Activated CD4-positive, alpha-beta T cell treated with anti-CD3 and anti-CD28 coated beads, Interleukin-2, amount 10 ng/mL, durations not matched to agents 24 days and 14 days (primary cell): ENCODE measurements at regions of chr4 and their contacts with region 1.

Region 1: DNA sequence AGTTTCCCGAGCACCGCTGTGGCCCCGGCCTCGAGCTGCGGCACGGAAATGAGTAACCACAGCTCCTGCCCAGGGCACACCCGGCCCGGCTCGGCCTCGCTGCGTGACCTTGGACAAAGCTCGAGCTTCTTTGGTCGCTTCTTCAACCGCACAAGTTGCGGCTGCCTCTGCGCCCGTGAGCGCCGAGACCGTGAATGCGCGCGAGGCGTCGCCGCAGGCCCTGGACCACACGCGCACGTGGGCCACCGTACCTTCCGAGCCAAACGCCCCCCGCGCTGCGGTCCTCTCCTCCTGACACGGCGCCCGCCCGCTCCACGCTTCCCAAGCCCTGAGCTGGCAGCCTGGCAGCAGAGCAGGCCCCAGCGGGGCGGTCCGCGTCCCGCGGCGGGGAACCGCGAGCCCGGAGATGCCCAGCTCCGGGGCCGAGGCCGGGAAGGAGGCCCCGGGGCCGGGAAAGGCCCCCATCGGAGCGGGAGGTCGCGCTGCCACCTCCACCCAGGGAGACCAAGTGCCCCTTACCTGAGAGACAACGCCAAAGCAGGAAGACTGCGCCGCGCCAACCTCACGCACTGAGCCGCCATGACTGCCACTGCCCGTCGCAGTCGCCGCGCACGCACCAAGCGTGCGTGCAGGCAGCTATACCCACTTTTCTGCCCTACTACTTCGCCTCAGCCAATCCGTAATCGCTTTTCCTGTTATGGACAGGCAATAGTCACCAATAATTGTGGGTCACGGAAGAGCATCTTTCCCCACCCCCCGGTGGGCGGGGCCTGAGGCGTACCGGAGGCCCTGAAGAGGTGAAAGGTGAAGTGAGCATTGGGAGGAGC is at the start of gene GRPEL1:
- DNase-seq: peak; percentile 100
- H3K4me3 Mint-ChIP-seq: peak within 1 kb of the TSS; percentile 90
- H3K27ac Mint-ChIP-seq: peak within 1 kb of the TSS; percentile 94
- H3K4me1 Mint-ChIP-seq: peaks cover 29% of the 10 kb centered on the region
- H3K27me3 Mint-ChIP-seq: peaks cover 15% of the 10 kb centered on the region
- total RNA-seq, gene GRPEL1: 100 and 106 TPM in 2 replicates

Region 2: DNA sequence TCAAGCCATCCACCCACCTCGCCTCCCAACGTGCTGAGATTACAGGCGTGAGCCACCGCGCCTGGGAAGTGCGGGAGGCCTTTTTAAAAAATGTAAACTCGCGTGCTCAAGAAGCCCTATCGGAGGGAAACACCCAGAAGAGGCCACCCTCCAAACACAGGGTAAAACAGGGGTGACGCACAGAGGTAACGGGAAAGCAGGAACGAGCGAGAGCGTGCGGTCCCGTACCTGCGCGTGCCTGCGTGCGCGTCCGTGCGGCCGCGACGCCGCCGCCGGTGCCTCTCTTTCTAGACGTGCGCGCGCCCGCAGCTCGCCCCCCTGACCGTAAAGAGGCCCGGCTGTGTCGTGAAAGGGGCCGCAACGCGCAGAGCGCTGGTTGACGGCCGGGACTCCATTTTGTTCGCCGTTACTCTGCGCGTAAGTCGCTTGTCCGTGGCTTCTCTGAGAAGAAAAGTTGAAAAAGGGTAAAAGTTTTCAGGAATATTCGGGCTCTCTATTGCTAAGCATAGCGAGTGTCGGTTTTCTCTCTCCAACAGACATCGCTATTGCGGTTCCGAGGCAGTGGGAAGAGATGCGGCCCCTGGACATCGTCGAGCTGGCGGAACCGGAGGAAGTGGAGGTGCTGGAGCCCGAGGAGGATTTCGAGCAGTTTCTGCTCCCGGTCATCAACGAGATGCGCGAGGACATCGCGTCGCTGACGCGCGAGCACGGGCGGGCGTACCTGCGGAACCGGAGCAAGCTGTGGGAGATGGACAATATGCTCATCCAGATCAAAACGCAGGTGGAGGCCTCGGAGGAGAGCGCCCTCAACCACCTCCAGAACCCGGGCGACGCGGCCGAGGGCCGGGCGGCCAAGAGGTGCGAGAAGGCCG is 427.1 kb before region 1 on chr4 and contains the start of gene MRFAP1:
- intact Hi-C with region 1: loop called (anchors 1 kb)
- DNase-seq: peak; percentile 98
- H3K4me3 Mint-ChIP-seq: peak within 1 kb of the TSS; percentile 94
- H3K27ac Mint-ChIP-seq: peak within 1 kb of the TSS; percentile 94
- H3K4me1 Mint-ChIP-seq: peaks cover 20% of the 10 kb centered on the region
- H3K27me3 Mint-ChIP-seq: no peaks in the 10 kb centered on the region
- total RNA-seq, gene MRFAP1: 122 TPM in 2 replicates

Region 3: DNA sequence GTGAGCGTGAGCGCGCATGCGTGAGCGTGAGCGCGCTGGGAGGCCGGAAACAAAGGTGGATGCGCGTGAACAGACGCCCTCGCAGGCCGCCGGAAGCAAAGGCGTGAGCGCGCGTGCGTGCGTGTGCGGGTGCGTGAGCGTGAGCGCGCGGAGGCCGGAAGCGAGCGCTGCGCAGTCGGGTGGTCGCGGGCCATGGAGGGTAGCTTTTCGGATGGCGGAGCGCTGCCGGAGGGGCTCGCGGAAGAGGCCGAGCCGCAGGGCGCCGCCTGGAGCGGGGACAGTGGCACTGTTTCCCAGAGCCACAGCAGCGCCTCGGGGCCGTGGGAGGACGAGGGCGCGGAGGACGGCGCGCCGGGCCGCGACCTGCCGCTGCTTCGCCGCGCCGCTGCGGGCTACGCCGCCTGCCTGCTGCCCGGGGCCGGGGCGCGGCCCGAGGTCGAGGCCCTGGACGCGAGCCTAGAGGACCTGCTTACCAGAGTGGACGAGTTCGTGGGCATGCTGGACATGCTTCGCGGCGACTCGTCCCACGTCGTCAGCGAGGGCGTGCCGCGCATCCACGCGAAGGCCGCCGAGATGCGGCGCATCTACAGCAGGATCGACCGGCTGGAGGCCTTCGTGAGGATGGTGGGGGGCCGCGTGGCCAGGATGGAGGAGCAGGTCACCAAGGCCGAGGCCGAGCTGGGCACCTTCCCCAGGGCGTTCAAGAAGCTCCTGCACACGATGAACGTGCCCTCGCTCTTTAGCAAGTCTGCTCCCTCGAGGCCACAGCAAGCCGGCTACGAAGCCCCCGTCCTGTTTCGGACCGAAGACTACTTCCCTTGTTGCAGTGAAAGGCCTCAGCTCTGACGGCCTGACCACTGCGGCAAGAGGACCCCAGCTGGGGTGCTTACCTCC is 351.4 kb before region 1 on chr4 and contains the start of gene BLOC1S4:
- intact Hi-C with region 1: loop called (anchors 1 kb)
- DNase-seq: peak; percentile 97
- H3K4me3 Mint-ChIP-seq: peak within 1 kb of the TSS; percentile 98
- H3K27ac Mint-ChIP-seq: peak within 1 kb of the TSS; percentile 99
- H3K4me1 Mint-ChIP-seq: peaks cover 23% of the 10 kb centered on the region
- H3K27me3 Mint-ChIP-seq: peaks cover 3% of the 10 kb centered on the region
- total RNA-seq, gene BLOC1S4: 20.1 and 21.4 TPM in 2 replicates

Region 4: GRCh38 chr4:6873792-6874461 is 193.7 kb before region 1 on chr4:
- intact Hi-C with region 1: loop called (anchors 1 kb)
- DNase-seq: peak; percentile 93
- H3K4me3 Mint-ChIP-seq: no peak overlapping the region
- H3K27ac Mint-ChIP-seq: no peak overlapping the region
- H3K4me1 Mint-ChIP-seq: peaks cover 4% of the 10 kb centered on the region
- H3K27me3 Mint-ChIP-seq: no peaks in the 10 kb centered on the region

Region 5: DNA sequence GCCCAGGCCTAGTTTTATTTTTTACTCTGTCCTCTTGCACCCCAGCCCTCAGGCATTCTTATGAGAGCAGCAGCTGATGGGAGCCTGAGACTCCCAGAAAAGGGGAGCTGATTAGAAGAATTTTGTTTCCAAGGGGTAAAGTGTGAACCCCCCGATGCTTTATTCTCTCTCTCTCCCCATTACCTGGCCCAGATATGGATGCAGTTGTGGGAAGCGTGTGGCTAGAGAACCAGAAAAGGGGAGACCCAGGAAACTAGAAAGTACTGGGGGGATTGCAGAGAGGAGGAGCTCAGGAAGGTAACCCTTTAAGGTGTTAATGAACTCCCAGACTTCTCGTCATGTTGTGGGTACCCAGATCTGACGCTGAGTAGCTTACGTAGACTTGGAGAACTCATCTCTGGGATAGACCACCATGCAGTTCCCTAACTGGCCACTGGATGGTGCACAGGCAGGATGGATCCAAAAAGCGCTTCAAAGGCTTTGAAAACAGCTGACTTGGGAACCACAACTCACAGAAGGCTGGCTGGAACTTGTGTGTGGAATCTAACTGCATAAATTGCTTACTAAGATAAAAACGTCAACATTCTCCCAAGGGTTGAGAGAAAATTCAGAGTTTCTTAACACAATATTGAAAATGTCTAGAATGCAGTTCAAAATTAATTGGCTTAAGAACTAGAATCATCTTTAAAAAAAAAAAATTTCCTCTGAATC is 93.4 kb before region 1 on chr4:
- intact Hi-C with region 1: loop called (anchors 5 kb)
- DNase-seq: peak; percentile 94
- H3K4me3 Mint-ChIP-seq: no peak overlapping the region
- H3K27ac Mint-ChIP-seq: no peak overlapping the region
- H3K4me1 Mint-ChIP-seq: peaks cover 10% of the 10 kb centered on the region
- H3K27me3 Mint-ChIP-seq: no peaks in the 10 kb centered on the region

Region 6: DNA sequence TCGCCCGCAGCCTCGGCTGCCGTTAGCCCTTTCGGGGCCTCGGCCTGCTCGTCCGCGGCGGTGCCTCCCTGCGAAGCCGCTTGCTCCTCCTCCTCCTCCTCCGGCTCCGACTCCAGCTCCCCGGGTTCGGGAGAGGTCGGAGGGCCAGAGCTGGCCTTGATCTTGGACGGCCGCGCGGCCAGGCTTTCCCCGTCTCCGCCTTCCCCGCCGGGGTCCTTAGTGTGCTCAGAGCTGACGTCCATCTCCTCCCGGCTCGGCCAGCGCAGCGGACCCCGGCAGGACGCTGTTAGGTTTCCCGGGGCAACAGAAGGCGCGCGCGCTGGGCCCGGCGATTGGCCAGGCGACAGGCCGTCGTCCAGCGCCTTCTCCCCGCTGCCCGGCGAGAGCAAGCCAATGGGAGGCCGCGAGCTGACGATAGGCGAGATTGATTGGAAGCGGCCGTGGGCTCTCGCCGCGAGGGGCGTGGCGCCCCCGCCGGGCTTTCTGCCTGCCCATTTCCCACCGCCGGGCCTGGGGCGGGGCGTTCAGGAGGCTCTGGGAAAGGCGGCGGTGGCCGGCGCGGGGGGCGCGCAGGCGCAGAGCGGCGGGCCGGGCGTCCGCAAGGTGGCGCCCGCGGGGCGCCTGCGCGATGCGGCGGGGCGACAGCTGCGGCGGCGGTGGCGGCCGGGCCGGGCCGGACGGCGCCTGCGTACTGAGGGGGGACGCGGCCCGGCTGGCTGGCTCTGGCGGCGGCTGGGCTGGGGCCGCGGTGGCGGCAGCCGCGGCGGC is 24.8 kb before region 1 on chr4 and contains the start of gene TADA2B:
- intact Hi-C with region 1: loop called (anchors 1 kb)
- DNase-seq: peak; percentile 99
- H3K4me3 Mint-ChIP-seq: peak within 1 kb of the TSS; percentile 97
- H3K27ac Mint-ChIP-seq: peak within 1 kb of the TSS; percentile 89
- H3K4me1 Mint-ChIP-seq: peaks cover 41% of the 10 kb centered on the region
- H3K27me3 Mint-ChIP-seq: peaks cover 12% of the 10 kb centered on the region
- total RNA-seq, gene TADA2B: 12.9 and 13.3 TPM in 2 replicates